Adrenal gland (tissue), 19 donors: ENCODE measurements at regions of chr9 and their contacts with region 1.

Region 1: GRCh38 chr9:13090628-13091027 is 188.9 kb downstream of the MPDZ start:
- DNase-seq: no peak
- H3K4me3 ChIP-seq: no peak overlapping the region
- H3K27ac ChIP-seq: no peak overlapping the region
- H3K4me1 ChIP-seq: no peaks in the 10 kb centered on the region
- H3K27me3 ChIP-seq: no peaks in the 10 kb centered on the region
- CTCF ChIP-seq: no peak
- POLR2A ChIP-seq: no peak

Region 2: DNA sequence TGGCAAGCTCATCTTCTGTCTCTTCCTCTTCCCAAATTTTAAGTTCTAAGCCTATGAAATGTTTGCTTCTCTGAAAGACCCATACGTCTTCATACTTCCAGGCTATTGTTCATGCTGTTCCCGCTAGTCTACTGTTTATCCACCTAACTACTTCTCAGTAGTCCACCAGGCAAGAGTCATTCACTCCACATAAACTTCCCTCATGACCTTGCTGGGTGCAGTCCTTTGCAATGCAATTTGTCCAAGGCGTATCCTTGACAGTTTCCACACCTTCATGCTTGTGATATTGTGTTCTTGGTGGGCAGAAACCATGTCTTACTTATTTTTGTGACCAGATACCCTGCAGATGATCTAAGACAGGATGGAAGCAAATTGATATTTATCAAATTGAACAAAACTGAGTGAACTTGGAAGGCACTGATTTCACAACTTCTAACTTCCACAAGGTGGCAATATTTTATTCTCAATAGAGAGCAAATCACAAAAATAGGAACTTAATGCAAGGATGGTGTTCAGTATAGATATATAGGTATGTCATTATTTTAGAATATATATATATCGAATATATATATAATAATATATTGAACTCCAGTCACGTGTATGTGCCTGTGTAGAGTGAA is 367.1 kb before region 1 on chr9:
- intact Hi-C with region 1: loop called in 1 of 2 experiments (anchors 10 kb)
- DNase-seq: no peak
- H3K4me3 ChIP-seq: no peak overlapping the region
- H3K27ac ChIP-seq: no peak overlapping the region
- H3K4me1 ChIP-seq: no peaks in the 10 kb centered on the region
- H3K27me3 ChIP-seq: no peaks in the 10 kb centered on the region
- CTCF ChIP-seq: peak in 5 of 6 experiments; percentile 24 to 67 (median 54)
- POLR2A ChIP-seq: no peak

Region 3: GRCh38 chr9:13033959-13034693 is 56.5 kb before region 1 on chr9:
- intact Hi-C with region 1: loop called in 1 of 2 experiments (anchors 5 kb)
- DNase-seq: peak; percentile 27 to 81 (median 61)
- H3K4me3 ChIP-seq: peak overlapping the region in 1 of 4 donors; percentile 26
- H3K27ac ChIP-seq: no peak overlapping the region
- H3K4me1 ChIP-seq: no peaks in the 10 kb centered on the region
- H3K27me3 ChIP-seq: no peaks in the 10 kb centered on the region
- CTCF ChIP-seq: peak; percentile 45 to 81 (median 71)
- POLR2A ChIP-seq: no peak